ENCODE measurements at regions of chr2 and their contacts with region 1.

Region 1: GRCh38 chr2:43637030-43637803 is at the start of gene PLEKHH2:
- DNase-seq: peak; percentile 77 to 99
- H3K4me3 ChIP-seq: peak within 1 kb of the TSS; percentile 65 to 88 (median 76)
- H3K27ac ChIP-seq: no peak within 1 kb of the TSS
- H3K4me1 ChIP-seq: peaks cover 0 to 13% (median under 1%) of the 10 kb centered on the region in 4 experiments; a peak in 4 of 7 replicates
- H3K27me3 ChIP-seq: peaks cover 0 to 9% (median 6%) of the 10 kb centered on the region in 4 experiments; a peak in 5 of 7 replicates
- CTCF ChIP-seq: no peak
- EP300 ChIP-seq: no peak
- POLR2A ChIP-seq: peak in 1 of 2 experiments; percentile 51; a peak in 1 of 3 replicates
- RAD21 ChIP-seq: no peak
- total RNA-seq, gene PLEKHH2: 3.1 and 5.0 TPM in 2 replicates

Region 2: GRCh38 chr2:43622931-43623451 is 14.2 kb before region 1 on chr2:
- CTCF ChIA-PET with region 1: interaction called, 11 read pairs
- POLR2A ChIA-PET with region 1: interaction called, 3 read pairs
- DNase-seq: no peak
- H3K4me3 ChIP-seq: no peak overlapping the region
- H3K27ac ChIP-seq: no peak overlapping the region
- H3K4me1 ChIP-seq: no peaks in the 10 kb centered on the region
- H3K27me3 ChIP-seq: no peaks in the 10 kb centered on the region
- CTCF ChIP-seq: no peak
- EP300 ChIP-seq: no peak
- POLR2A ChIP-seq: no peak
- RAD21 ChIP-seq: no peak

Region 3: GRCh38 chr2:43676322-43677050 is 39.3 kb after region 1 on chr2 and contains the start of gene C1GALT1C1L:
- CTCF ChIA-PET with region 1: no interaction called
- POLR2A ChIA-PET with region 1: no interaction called
- DNase-seq: no peak
- H3K4me3 ChIP-seq: peak within 1 kb of the TSS in 3 of 4 experiments; percentile 2 to 48 (median 22); a peak in 4 of 8 replicates
- H3K27ac ChIP-seq: no peak within 1 kb of the TSS
- H3K4me1 ChIP-seq: no peaks in the 10 kb centered on the region
- H3K27me3 ChIP-seq: no peaks in the 10 kb centered on the region
- CTCF ChIP-seq: no peak
- EP300 ChIP-seq: no peak
- POLR2A ChIP-seq: no peak
- RAD21 ChIP-seq: no peak
- total RNA-seq, gene C1GALT1C1L: not detected in 2 replicates